ENCODE measurements at regions of chr1 and their contacts with region 1.

Region 1: DNA sequence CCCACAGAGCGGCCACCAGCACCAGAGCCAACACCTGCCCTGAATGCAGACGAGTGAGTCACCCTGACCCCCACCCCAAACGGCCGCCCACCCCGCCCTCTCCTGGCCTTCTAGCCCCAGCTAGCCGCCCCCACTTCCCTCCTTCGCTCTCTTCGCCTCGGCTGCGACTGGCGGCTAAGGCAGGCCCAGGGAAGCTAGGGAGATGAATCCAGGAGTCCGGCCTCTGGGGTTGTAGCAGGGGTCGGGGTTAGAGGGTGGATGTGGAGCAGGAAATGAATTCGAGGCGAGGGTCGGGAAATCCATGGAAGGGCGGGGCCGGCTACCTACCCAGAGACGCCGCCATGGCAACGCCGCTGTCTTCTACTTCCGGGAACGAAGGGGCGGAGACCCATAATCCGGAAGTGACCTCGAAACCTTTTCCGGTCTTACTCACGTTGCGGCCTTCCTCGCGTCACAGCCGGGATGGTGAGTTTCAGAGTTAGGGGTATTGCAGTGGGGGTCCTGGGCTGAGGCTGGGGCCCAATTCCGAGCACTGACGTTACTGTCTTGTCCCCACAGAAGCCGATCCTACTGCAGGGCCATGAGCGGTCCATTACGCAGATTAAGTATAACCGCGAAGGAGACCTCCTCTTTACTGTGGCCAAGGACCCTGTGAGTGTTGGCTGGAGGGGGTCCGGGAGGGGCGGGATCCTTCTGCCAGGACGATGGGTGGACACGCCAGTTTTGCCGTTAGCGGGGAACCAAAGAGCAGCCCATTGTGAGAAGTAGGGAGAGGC is at the starts of genes EIF3I and TMEM234:
- DNase-seq: peak; percentile 88 to 95
- ATAC-seq: peak; percentile 91 to 97 (median 96)
- H3K4me3 ChIP-seq: peak within 1 kb of the TSS; percentile 65 to 94 (median 84)
- H3K27ac ChIP-seq: peak within 1 kb of the TSS; percentile 69 to 95 (median 90)
- H3K4me1 ChIP-seq: peaks cover 5 to 36% (median 28%) of the 10 kb centered on the region in 9 donors
- H3K27me3 ChIP-seq: no peaks in the 10 kb centered on the region
- CTCF ChIP-seq: no peak
- total RNA-seq, gene EIF3I: 90.3 to 138 (median 103) TPM
- total RNA-seq, gene TMEM234: 8.1 to 12.8 (median 11.1) TPM

Region 2: DNA sequence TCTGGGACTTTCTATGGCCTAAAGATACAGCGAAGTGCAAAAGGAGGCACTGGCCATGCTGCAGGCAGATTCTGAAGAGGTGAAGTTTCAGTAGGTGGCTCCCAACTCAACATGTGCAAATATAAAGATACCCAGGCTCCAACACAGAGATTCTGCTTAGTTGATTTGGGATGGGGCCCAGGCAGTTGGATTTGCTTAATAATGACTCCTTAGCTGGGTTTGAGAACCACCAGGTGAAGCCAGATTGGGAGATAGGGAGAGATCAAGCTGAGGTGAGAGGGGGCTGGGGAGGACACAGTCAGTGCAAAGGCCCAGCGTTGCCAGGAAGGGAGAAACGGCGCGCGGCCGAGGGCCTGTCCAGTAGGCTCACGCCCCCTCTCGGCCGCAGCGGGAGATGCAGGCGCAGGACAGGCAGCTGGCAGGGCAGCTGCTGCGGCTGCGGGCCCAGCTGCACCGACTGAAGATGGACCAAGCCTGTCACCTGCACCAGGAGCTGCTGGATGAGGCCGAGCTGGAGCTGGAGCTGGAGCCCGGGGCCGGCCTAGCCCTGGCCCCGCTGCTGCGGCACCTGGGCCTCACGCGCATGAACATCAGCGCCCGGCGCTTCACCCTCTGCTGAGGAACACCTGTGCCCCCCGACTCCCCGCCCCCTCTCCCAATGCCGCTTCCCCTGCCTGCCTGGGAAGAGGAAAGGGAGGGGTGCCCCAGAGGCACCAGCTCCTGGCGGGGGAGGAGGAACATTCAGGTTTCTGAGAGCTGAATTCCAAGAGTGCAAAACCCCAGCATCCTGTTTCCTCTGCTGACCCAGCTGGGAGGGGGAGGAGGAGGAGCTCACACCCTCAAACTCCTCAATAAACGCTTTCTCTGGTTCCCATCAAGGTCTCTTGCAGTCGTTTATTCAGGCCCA is 26.1 kb after region 1 on chr1:
- intact Hi-C with region 1: no loop called
- DNase-seq: peak; percentile 86 to 88
- ATAC-seq: peak; percentile 40 to 66 (median 54)
- H3K4me3 ChIP-seq: peak overlapping the region in 5 of 10 donors; percentile 10 to 31 (median 20)
- H3K27ac ChIP-seq: peak overlapping the region; percentile 66 to 94 (median 92)
- H3K4me1 ChIP-seq: peaks cover 8 to 84% (median 74%) of the 10 kb centered on the region in 9 donors
- H3K27me3 ChIP-seq: no peaks in the 10 kb centered on the region
- CTCF ChIP-seq: peak; percentile 64 to 92 (median 84)

Region 3: GRCh38 chr1:32311709-32312393 is 89.7 kb after region 1 on chr1:
- intact Hi-C with region 1: loop called in 6 of 10 experiments (anchors 5 to 10 kb)
- DNase-seq: no peak
- ATAC-seq: no peak
- H3K4me3 ChIP-seq: no peak overlapping the region
- H3K27ac ChIP-seq: no peak overlapping the region
- H3K4me1 ChIP-seq: peaks cover 0 to 24% (median 8%) of the 10 kb centered on the region in 9 donors
- H3K27me3 ChIP-seq: no peaks in the 10 kb centered on the region
- CTCF ChIP-seq: no peak

Measured in heart right ventricle (tissue), 16 donors.